GM10248 (cell line): ENCODE measurements at regions of chr1 and their contacts with region 1.

Region 1: DNA sequence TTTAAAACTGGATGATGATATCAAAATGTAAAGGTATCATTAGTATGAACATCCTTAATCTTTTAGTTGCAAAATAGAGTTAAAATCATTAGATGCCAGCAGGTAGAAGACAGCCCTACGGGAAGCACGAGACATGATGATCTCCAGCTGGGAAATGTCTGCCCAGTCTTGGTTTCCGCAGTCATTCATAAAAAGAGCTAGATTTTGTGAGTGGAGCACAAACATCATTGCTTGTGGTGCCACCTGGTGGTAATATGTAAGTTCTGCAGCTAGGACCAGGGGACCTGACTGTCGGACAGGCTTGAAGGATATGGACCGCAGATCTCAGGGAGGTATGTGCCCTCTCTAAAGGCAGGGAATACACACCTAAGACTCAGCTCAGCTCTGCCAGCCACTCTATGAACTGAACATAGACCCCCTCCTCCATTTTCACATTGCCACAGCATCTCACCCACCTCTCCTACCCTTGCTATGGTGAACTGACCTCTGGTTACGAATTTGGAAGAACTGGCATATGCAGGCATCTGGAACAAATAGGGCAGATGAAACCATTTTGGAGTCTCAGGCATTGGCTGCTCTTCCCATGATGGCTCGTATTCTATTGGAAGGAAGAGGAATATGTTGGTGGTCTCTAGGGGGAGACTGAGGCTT is 9.2 kb downstream of the FCMR start:
- DNase-seq: peak; percentile 70
- CTCF ChIP-seq: peak; percentile 76

Region 2: GRCh38 chr1:206663832-206664652 is 248.5 kb before region 1 on chr1:
- CTCF ChIA-PET with region 1: interaction called, 15 read pairs
- POLR2A ChIA-PET with region 1: no interaction called
- DNase-seq: peak; percentile 78
- CTCF ChIP-seq: peak; percentile 66

Region 3: DNA sequence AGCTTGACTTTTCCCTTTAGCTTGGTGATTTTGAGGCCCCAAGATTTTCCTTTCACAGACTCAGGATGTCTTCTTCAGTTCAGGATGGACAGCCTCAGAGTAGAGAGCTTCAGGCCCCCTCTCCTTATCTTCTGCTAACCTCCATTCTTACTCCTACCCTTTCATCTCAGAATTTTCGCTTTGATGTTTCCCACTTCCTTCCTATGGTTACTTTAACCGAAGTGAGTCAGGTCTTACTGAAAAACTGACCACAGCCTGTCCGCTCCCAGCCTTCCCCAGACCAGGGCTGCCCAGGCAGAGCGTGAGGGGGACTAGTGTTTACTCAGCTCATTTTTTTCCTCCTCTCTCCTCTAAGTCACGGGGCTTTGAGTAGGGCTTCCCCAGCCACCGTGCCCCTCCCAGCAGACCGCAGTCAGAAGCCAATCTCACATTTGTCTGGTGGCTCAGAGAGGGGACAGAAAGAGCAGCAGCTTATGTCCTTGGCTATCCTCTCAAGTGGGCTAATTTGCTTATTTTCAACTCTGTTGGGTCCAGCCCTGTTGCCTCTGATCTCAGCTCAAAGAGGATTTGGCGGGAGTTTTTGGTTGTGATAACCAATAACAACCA is 146.2 kb before region 1 on chr1:
- CTCF ChIA-PET with region 1: interaction called, 15 read pairs
- POLR2A ChIA-PET with region 1: no interaction called
- DNase-seq: peak; percentile 57
- CTCF ChIP-seq: no peak

Region 4: DNA sequence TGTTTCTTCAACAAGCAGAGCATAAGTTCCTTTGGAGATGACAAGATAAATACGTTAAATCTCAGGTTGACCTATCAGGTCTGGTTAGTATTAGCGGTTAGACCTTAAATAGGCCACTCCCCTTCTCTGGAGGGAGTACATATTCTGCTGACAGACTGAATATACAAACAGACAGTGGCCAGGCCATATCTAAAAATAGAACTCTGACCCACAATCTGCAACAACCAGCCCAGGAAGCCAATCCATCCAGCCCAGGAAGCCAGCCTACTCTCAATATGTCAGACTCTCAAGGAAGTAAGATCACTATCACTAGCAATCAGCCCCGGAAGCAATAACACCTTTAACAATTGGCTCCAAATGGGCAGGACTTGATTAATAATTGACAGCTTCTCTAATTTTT is 40.4 kb before region 1 on chr1:
- CTCF ChIA-PET with region 1: interaction called, 17 read pairs
- POLR2A ChIA-PET with region 1: no interaction called
- DNase-seq: no peak
- CTCF ChIP-seq: no peak

Region 5: DNA sequence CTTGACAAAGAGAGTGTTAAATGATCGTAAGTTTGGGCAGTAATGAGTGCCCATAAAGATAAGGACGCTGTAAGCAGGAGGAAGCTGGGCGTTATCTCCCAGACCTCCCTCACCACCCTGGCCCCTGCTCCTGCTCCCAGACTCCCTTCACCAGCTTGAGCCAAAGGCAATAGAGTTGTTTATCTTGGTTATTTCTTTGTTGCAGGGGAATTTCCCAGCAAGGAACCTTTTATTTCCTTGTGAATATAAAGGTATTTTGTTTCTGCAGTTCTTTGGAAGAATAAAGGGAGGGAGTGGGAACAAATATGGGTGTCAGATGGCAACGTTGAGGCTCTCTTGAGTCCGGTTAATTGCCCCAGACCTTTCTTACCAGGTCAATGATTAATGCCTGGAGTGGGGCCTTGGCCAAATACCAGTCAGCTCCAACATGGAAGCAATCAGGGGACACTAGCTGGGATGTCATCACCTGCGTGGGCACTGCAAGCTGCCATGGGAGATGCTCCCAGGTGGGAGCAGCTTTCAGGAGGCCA is 29.4 kb after region 1 on chr1:
- CTCF ChIA-PET with region 1: interaction called, 307 read pairs
- POLR2A ChIA-PET with region 1: no interaction called
- DNase-seq: no peak
- CTCF ChIP-seq: no peak

Region 6: DNA sequence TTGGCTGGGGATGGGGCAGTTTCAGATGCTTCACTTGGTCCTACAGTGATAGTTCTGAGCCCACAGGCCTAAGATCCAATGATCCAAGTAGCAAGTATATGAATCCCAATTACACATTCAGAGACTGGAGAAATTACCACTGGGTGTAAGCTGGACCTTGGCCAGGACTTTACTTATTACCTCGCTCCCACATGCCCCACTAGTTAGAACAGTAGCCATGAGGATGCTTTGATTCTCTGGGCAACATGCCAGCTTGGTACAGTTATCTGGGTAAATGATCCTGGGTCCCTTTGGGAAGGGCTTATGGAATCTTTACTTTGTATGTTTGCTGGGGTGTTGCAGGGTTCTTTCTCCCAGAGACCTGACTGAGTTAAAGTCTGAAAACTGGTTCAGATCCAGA is 62.7 kb after region 1 on chr1:
- CTCF ChIA-PET with region 1: interaction called, 68 read pairs
- POLR2A ChIA-PET with region 1: no interaction called
- DNase-seq: no peak
- CTCF ChIP-seq: no peak